ENCODE measurements at regions of chr15 and their contacts with region 1.

Region 1: DNA sequence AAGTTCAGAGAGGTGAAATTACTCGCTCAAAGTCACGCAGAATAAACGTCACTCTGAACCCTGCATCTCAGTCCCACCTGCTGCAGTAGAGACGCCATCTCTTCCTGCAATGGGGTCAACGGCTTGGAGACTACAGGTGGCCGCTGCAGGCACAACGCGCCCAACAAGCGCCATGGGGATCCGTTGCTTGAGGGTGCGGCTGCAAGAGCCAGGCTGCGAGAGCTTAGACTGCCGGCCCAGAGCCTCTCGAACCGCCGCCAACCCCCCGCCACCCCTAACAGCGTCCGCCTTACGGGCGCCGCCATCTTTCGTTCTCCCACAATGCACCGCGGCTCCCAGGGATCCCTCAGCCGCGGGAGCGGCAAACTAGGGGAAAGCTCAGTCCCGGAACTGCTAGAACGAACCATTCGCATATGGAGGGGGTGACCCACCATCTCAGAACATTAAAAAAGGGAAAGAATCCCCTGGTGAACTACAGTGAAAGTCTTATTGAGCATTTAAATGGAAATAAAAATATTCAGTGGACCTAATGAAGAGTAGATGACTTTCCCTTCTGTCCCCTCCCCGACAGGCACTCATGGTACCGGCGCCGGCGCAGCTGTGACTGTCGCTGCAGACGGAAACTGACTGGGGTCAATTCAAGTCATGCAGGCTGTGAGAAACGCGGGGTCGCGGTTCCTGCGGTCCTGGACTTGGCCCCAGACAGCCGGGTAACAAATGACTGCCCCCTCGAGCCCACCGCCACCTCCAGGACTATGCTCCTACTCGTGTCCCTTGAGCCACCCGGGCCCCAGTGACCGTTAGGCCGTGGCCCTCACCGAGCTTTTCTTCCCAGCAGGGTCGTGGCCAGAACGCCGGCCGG is at the starts of genes MRPL46 and MRPS11:
- DNase-seq: peak; percentile 94
- H3K4me3 ChIP-seq: peak within 1 kb of the TSS; percentile 93
- H3K27ac ChIP-seq: peak within 1 kb of the TSS; percentile 64
- H3K4me1 ChIP-seq: peaks cover 31% of the 10 kb centered on the region
- CTCF ChIP-seq: no peak
- total RNA-seq, gene MRPL46: 30.4 and 32.4 TPM in 2 replicates
- total RNA-seq, gene MRPS11: 49.8 and 61.6 TPM in 2 replicates

Region 2: GRCh38 chr15:88529021-88529630 is 61.8 kb after region 1 on chr15:
- CTCF ChIA-PET with region 1: no interaction called
- POLR2A ChIA-PET with region 1: no interaction called
- intact Hi-C with region 1: no loop called
- DNase-seq: no peak
- H3K4me3 ChIP-seq: no peak overlapping the region
- H3K27ac ChIP-seq: no peak overlapping the region
- H3K4me1 ChIP-seq: no peaks in the 10 kb centered on the region
- CTCF ChIP-seq: no peak

Region 3: DNA sequence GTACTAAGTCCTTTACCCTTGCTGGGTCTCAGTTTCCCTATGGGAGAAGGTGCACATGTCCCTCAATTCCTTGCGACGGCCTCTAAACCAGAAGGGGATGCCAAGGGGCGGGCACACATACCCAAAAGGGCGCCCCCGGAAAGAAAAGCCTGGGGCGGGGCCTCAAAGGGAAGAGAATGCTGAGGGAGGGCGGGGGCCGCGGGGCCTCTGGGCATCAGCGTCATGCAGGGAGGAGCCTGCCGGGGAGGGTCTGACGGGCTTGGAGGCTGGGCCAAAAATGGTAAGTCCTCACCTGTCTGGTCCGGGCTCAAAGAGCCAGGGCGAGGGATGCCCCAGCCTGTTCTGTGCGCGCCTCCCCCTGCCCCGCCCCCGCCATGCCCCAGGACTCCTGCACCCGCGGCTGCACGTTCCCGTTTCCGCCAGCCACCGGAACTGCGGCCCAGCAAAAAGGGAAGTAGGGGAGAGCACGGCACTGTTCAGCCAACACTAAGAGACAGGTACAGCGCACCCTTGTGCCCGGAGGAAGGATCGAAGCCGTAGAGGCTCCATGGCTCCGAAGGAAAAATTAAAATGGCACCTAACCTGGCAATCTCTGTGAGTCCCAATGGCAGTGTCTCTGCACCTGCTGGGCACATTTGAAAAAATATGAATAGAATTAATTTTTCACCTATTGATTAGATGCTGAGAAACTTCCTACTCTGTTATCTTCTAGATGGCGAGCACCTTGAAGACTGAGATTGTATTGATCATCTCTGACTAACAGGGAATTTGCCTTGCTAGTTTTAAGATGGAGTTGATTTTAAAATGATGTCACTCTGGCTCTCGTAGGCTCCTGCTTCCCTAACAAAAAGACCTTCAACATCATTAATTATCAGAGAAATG is 79.2 kb after region 1 on chr15 and contains the start of gene DET1:
- CTCF ChIA-PET with region 1: no interaction called
- POLR2A ChIA-PET with region 1: no interaction called
- intact Hi-C with region 1: loop called (anchors 2 kb)
- DNase-seq: peak; percentile 97
- H3K4me3 ChIP-seq: peak within 1 kb of the TSS; percentile 85
- H3K27ac ChIP-seq: peak within 1 kb of the TSS; percentile 72
- H3K4me1 ChIP-seq: peaks cover 12% of the 10 kb centered on the region
- CTCF ChIP-seq: peak; percentile 82
- total RNA-seq, gene DET1: 7.1 and 9.8 TPM in 2 replicates

Region 4: GRCh38 chr15:88664151-88664778 is 197.0 kb after region 1 on chr15:
- CTCF ChIA-PET with region 1: interaction called, 9 read pairs
- POLR2A ChIA-PET with region 1: no interaction called
- intact Hi-C with region 1: loop called (anchors 5 kb)
- DNase-seq: peak; percentile 73
- H3K4me3 ChIP-seq: no peak overlapping the region
- H3K27ac ChIP-seq: no peak overlapping the region
- H3K4me1 ChIP-seq: peaks cover 6% of the 10 kb centered on the region
- CTCF ChIP-seq: peak; percentile 84